ENCODE measurements at regions of chr2 and their contacts with region 1.

Region 1: DNA sequence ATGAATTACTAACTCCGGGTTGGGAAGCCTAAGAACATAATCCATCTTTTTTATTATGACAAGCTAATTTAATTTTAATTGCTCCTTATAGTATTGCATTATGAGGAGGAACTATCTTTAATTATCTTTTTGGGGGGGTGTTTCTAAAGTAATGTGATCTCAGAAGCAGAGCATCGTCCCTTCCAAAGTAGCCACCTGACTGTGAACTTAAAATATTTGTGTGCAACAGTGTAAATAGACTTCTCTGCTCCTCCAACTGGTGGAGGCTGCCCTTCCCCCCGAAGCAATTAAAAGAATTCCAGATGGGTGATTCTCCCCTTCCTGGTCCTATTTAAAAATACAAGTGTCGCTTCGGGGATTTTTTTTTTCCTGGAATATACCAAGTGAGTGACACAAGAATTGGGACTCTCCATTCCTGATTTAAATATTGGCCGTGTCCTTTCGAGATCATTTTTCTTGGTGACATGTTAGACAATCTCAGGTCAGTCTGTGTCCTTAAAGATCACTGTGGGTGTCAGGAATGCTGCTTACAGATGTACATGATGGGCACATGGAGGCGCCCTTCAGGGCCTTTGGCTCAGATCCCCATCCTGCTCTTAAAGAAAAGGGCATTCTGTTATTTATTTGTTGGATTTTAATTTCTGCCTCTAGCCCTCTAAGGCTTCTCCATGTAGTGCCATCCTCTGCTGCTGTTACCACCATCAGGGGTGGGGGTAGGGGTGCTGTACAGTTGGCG is 55.8 kb downstream of the TCF7L1 start:
- DNase-seq: no peak
- ATAC-seq: no peak
- H3K4me3 ChIP-seq: no peak overlapping the region
- H3K27ac ChIP-seq: no peak overlapping the region
- H3K4me1 ChIP-seq: no peaks in the 10 kb centered on the region
- H3K27me3 ChIP-seq: peaks cover 0 to 26% of the 10 kb centered on the region in 2 experiments; a peak in 2 of 5 replicates
- CTCF ChIP-seq: no peak
- EP300 ChIP-seq: no peak
- POLR2A ChIP-seq: no peak
- RAD21 ChIP-seq: no peak

Region 2: GRCh38 chr2:84999553-84999955 is 189.5 kb before region 1 on chr2:
- CTCF ChIA-PET with region 1: no interaction called
- POLR2A ChIA-PET with region 1: no interaction called
- in situ Hi-C with region 1: no loop called
- intact Hi-C with region 1: no loop called
- DNase-seq: no peak
- ATAC-seq: no peak
- H3K4me3 ChIP-seq: no peak overlapping the region
- H3K27ac ChIP-seq: no peak overlapping the region
- H3K4me1 ChIP-seq: no peaks in the 10 kb centered on the region
- H3K27me3 ChIP-seq: no peaks in the 10 kb centered on the region
- CTCF ChIP-seq: no peak
- EP300 ChIP-seq: no peak
- POLR2A ChIP-seq: no peak
- RAD21 ChIP-seq: no peak

Region 3: DNA sequence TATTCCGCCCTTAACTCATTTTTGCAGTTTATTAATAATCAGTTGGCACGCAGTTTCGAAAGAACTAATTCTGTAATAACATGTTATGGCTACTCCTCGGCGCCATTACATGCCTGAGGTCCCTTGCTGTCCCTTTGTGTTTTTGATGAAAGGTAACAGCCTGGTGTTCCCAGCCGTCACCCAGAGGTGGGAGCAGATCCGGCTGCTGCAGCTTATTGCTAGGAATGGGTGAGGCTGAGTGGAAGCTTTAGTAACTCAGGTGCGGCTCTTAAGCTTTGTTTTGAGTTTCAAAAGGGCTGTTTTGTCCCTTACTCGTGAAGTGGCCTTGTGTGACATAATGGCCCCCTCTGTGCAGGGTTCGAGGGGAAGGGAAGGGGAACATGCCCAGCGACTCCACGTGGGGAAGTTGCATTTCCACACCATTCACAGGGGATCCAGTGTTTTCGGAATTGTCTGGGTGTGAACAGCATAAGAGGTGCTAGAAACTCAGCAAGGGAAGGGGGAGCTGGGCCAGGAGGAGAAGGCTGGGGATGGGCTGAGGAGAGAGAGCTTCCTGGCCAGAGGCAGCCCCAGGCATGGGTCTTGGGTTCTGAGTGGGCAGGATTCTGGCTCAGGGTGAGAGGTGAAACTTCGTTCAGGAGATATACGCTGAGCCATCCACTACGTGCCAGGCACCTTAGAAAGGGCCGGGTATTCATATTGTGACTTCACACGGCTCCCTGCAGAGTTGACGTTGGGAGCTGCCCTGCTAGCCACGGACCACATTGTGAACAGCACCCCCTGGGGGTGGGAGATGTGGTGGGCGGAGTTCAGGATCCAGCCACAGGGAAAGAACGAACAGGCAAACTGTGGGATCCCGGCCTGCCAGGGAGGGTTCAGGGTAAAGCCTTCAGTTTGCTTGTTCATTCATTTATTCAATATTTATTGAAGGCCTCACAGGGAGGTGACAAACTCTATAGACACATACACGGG is 54.4 kb after region 1 on chr2:
- CTCF ChIA-PET with region 1: no interaction called
- POLR2A ChIA-PET with region 1: interaction called, 3 read pairs
- in situ Hi-C with region 1: no loop called
- intact Hi-C with region 1: loop called (anchors 5 kb)
- DNase-seq: peak; percentile 70 to 76 (median 74)
- ATAC-seq: peak; percentile 96
- H3K4me3 ChIP-seq: no peak overlapping the region
- H3K27ac ChIP-seq: no peak overlapping the region
- H3K4me1 ChIP-seq: no peaks in the 10 kb centered on the region
- H3K27me3 ChIP-seq: peaks cover 39 to 69% of the 10 kb centered on the region in 2 experiments
- CTCF ChIP-seq: peak; percentile 68 to 77 (median 73)
- EP300 ChIP-seq: no peak
- POLR2A ChIP-seq: no peak
- RAD21 ChIP-seq: peak; percentile 13 to 58; a peak in 2 of 4 replicates

Region 4: DNA sequence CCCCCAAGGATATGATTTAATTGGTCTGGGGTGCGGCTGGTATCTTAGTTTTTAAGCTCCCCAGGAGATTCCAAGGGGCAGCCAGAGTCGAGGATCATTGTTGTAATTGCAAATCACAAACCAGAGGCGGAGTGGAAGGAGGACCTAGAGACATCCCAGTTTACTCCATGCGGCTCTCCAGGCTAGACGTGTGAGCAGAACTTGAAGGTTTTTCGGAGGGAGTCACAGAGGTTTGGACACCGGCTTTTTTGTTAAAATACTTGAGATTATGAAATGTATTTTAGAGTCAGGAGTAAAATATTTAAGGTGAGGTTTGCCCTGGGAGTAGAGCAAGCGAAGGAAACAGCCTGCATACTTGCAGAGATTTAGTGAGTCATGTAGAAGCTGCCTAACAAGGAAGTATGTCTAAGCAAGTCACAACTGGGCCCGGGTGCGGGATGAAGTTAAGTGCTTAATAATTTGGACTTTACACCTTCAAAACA is 99.3 kb after region 1 on chr2:
- CTCF ChIA-PET with region 1: no interaction called
- POLR2A ChIA-PET with region 1: no interaction called
- in situ Hi-C with region 1: no loop called
- intact Hi-C with region 1: loop called (anchors 5 kb)
- DNase-seq: no peak
- ATAC-seq: no peak
- H3K4me3 ChIP-seq: no peak overlapping the region
- H3K27ac ChIP-seq: no peak overlapping the region
- H3K4me1 ChIP-seq: no peaks in the 10 kb centered on the region; a peak in 1 of 5 replicates
- H3K27me3 ChIP-seq: peaks cover 49 to 68% of the 10 kb centered on the region in 2 experiments
- CTCF ChIP-seq: no peak
- EP300 ChIP-seq: no peak
- POLR2A ChIP-seq: no peak
- RAD21 ChIP-seq: no peak